RWPE1 (cell line): ENCODE measurements at regions of chr14 and their contacts with region 1.

Region 1: DNA sequence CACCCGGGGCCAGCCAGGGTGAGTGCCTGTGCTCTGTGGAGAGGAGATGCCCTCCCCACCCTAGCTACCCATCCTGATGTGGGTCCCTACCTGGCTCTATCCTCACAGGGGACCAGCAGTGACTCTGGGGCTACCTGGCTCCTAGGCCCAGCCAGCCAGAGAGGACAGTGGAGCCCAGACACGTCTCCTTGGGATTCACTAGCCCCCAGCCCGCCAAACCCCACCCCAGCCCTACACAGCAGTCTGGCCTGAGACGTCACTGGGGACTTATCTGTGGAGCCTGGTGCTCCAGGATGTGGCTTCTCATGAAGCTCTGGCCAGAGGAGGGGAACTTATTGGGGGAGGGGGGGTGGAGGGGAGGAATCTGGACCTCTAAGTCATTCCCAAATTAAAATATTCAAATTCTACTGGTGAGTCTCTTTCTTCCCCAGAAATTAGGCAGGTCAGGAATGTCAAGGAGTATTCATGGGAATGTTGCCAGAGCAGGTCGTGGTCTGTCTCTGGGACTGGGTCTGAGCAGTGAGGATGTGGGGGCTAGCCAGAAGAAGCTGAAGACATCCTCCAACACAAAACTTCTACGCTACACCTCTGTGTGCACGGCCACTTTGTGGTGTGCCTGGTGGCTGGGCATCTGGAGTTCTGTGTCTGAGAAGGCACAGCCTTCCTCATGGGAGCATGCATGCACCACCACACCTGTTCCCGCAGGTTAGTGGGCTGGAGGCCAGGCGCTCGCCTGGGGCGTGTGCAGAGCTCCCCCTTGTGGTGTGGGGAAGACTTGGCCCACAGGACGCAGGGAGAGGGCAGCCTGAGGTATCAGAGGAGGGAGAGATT is 2.7 kb downstream of the CMTM5 start:
- DNase-seq: peak; percentile 68
- H3K27ac ChIP-seq: no peak overlapping the region
- CTCF ChIP-seq: peak; percentile 94

Region 2: GRCh38 chr14:23320774-23321571 is 58.6 kb before region 1 on chr14 and contains the start of gene PABPN1:
- CTCF ChIA-PET with region 1: interaction called, 34 read pairs
- POLR2A ChIA-PET with region 1: interaction called, 6 read pairs
- DNase-seq: peak; percentile 99
- H3K27ac ChIP-seq: peak within 1 kb of the TSS; percentile 87
- CTCF ChIP-seq: no peak

Region 3: GRCh38 chr14:23327947-23328744 is 51.4 kb before region 1 on chr14:
- CTCF ChIA-PET with region 1: interaction called, 34 read pairs
- POLR2A ChIA-PET with region 1: interaction called, 6 read pairs
- DNase-seq: peak; percentile 76
- H3K27ac ChIP-seq: no peak overlapping the region
- CTCF ChIP-seq: peak; percentile 89

Region 4: GRCh38 chr14:23366426-23366921 is 13.1 kb before region 1 on chr14:
- CTCF ChIA-PET with region 1: interaction called, 13 read pairs
- POLR2A ChIA-PET with region 1: interaction called, 3 read pairs
- DNase-seq: peak; percentile 80
- H3K27ac ChIP-seq: peak overlapping the region; percentile 97
- CTCF ChIP-seq: no peak